H1 (cell line): ENCODE measurements at regions of chr5 and their contacts with region 1.

Region 1: DNA sequence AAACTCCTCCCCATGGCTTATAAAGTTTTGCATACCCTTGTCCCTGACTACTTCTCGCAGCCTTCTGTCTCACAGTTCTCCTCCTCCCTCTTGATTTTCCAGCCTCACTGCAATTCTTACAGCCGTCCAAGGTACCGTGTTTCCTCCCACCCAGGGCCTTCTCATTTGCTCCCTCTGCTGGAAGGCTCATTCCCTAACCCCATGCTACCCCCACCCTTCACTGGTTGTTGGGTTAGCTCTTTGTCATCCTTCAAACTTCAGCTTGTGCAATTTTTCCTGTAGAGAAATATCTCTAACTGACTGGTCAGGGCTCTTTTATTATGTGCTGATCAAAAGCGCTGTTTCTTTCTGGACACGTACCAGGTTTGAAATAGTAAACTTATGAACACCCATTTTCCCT is 329.2 kb downstream of the EBF1 start:
- DNase-seq: peak; percentile 7 to 48
- H3K4me3 ChIP-seq: no peak overlapping the region
- H3K27ac ChIP-seq: no peak overlapping the region
- H3K4me1 ChIP-seq: no peaks in the 10 kb centered on the region; a peak in 1 of 7 replicates
- H3K27me3 ChIP-seq: no peaks in the 10 kb centered on the region
- CTCF ChIP-seq: peak; percentile 68 to 82 (median 72)
- EP300 ChIP-seq: no peak
- POLR2A ChIP-seq: no peak
- RAD21 ChIP-seq: peak; percentile 76 to 77

Region 2: DNA sequence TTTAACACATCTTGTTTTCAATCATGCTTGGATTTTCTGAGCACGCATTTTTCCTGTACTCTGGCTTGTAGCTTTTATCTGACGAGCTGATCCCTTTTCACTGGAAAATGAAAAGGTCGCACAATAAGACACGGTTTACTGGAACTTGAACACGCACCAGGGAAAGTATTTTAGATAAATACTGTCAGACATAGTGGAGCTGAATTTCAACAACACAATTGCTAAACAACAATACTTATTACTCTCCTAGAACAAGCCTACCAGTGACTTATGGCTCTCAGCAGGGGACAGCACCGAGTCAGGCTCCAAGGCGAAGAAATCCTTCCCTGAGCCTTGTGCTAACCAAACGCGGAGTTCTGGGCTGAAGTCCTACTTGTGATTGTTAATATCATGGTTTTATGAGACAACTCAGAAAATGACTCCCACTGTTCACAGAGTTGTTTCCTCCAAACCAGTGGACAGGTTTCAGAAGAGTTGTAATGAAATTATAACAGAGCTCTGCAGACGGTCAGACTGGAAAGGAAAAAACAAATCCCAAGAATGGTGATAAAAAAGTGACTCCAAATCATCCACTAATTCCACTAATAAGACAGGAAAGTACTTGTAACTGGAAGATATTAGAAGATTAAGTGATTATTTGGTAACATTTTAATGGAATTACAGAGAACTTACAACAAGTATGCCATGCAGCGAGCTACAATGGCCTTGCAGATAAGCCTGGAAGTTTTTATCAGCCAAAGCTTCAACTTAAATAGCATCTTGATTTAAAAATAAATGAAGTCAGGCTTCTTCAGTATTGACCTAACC is 30.4 kb before region 1 on chr5:
- CTCF ChIA-PET with region 1: interaction called, 11 read pairs
- POLR2A ChIA-PET with region 1: no interaction called
- DNase-seq: no peak
- H3K4me3 ChIP-seq: no peak overlapping the region
- H3K27ac ChIP-seq: no peak overlapping the region
- H3K4me1 ChIP-seq: peaks cover 0 to 7% (median 5%) of the 10 kb centered on the region in 4 experiments; a peak in 4 of 7 replicates
- H3K27me3 ChIP-seq: no peaks in the 10 kb centered on the region
- CTCF ChIP-seq: no peak
- EP300 ChIP-seq: no peak
- POLR2A ChIP-seq: no peak
- RAD21 ChIP-seq: peak in 1 of 2 experiments; percentile 21; a peak in 1 of 4 replicates

Region 3: DNA sequence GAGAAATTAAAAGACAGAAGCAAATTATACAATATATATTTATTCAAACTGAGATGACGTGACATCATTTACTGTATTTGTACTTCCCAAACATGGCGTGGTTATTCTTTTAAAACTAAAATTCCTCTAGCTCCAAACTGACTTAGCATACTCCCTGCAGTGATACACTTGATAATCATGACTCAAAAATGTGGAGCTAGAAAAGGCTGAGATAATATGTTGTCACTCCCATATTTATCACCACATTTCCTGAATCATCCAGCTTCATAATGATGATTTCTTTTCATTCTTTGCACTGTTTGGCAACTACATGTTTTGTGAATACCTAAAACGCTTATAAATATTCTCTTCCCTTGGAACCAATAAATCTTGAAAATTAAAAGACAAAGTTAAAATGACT is 11.8 kb before region 1 on chr5:
- CTCF ChIA-PET with region 1: interaction called, 27 read pairs
- POLR2A ChIA-PET with region 1: no interaction called
- DNase-seq: no peak
- H3K4me3 ChIP-seq: no peak overlapping the region
- H3K27ac ChIP-seq: no peak overlapping the region
- H3K4me1 ChIP-seq: no peaks in the 10 kb centered on the region
- H3K27me3 ChIP-seq: no peaks in the 10 kb centered on the region
- CTCF ChIP-seq: no peak
- EP300 ChIP-seq: no peak
- POLR2A ChIP-seq: no peak
- RAD21 ChIP-seq: no peak

Region 4: DNA sequence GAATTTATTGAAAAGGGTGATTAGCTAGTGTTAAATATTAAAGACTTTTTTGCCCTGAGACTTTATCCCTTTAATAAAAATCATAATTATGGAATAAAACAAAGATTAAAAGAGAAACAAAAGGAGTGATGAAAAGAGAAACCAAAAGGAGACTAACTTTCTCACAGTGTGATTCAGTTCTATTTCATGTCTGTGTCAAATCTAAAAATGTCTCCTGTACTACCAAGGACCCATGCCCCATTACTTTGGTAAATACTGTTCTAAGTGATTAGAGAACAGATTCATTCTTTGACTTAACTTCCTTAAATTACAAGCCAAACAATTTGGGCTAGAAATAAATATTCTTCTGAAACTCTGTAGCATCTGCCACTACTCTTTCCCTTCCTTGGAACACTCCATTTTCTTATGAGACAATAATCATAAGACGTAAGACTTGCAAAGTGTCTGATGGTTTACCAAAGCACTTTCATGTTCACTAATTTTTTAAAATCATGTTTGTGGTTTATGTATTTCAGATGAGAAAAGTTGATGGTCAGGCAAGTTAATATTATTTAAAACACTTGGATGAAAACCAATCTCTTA is 10.2 kb after region 1 on chr5:
- CTCF ChIA-PET with region 1: interaction called, 11 read pairs
- POLR2A ChIA-PET with region 1: no interaction called
- DNase-seq: no peak
- H3K4me3 ChIP-seq: no peak overlapping the region
- H3K27ac ChIP-seq: no peak overlapping the region
- H3K4me1 ChIP-seq: no peaks in the 10 kb centered on the region
- H3K27me3 ChIP-seq: no peaks in the 10 kb centered on the region
- CTCF ChIP-seq: no peak
- EP300 ChIP-seq: no peak
- POLR2A ChIP-seq: no peak
- RAD21 ChIP-seq: no peak